ENCODE measurements at regions of chr3 and their contacts with region 1.

Region 1: DNA sequence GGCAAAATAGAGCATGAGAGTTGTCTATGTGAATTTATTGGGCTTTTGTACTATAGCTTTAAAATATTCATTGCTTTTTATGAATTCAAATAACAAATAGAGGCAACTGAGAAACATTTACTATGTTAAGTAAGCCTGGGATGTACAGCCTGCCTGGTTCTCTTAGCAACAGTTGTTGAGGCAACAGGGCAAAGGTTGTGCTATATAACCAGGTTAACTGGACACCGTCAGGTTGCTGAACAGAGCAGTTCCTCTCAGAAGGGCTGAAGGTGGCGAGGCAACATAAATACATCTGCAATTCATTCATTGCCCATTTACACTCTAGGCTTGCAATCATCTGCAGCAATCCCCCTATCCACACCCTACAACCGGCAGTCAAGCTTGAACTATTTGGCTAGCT is 78.2 kb downstream of the GTF2E1 start:
- DNase-seq: no peak
- CTCF ChIP-seq: no peak

Region 2: DNA sequence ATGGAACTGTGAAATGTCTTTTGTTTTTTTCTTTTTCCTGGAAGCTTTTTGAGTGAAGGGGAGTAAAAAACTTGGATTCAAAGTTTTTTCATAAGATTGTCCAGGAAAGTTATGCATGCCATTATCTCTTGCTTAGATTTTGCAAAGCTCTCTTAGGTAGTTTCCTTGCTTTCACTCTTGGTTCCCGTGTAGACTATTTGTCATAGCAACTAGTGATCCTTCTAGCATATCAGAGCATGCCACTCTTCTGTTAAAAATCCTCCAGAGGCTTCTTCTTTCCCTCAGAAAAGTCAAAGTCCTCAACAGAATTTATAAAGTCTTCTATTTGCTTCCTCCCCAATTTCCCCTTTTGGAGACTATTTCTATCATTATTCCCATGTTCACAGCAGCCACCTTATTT is 57.1 kb before region 1 on chr3:
- CTCF ChIA-PET with region 1: no interaction called
- POLR2A ChIA-PET with region 1: no interaction called
- DNase-seq: peak; percentile 22
- CTCF ChIP-seq: no peak

Region 3: DNA sequence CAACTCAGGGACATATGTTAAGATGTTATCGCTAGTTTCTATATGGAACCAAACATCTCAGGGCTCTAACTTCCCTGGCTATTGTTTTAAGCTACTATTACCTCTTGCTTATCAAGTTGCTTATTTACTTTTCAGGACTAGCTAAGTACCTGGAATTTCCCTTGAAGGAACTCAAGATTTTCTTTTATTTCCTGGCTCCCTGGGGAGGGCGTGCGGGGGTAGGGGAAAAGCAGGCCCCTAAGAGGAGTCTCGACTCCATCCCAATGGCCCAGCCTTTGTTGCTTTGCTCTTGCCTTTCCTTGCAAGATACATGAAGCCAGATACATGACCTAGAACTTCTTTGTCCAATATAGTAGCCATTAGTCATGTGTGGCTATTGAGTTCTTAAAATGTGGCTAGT is 10.3 kb after region 1 on chr3:
- CTCF ChIA-PET with region 1: interaction called, 11 read pairs
- POLR2A ChIA-PET with region 1: no interaction called
- DNase-seq: no peak
- CTCF ChIP-seq: no peak

Measured in GM10248 (cell line).